ENCODE measurements at regions of chr13 and their contacts with region 1.

Region 1: DNA sequence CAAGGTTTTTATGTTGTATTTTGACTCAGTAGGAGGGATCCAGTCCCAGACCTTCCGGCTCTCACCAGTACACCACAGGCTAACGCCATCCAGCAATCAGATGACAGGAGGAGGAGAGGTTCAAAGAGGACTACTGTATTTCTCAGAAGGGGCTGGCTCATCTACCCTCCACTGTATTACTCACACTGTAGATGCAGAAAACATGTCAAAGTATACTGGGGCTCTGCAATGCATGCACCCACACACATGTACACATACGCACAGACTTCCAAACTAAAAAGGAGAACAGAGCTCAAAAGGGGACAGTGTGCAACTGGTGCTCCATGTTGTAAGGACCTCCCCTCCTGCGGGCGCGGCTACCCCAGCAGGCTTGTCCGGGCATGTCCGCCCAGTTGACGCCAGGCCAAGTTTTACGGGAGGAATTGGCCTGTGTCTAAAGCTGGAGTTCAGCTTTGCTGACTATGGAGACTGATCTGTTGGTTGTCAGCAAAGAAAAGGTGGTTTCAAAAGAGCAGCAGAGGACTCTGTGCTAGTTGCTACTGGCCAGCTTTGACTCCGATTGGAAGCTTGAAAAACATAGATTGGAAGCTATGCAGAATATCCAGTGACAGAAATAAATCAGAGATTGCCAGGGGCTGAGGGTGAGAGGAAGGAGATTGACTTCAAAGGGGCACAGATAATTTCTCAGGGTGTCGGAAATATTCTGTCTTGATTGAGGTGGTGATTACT is 314.2 kb downstream of the DLEU7 start:
- DNase-seq: peak; percentile 94
- ATAC-seq: peak; percentile 95

Region 2: GRCh38 chr13:49996951-49997895 is 532.1 kb before region 1 on chr13 and contains the start of gene TRIM13:
- intact Hi-C with region 1: loop called (anchors 5 kb)
- DNase-seq: peak; percentile 94
- ATAC-seq: peak; percentile 91
- total RNA-seq, gene TRIM13: 24.2 TPM

Region 3: GRCh38 chr13:50123862-50124536 is 405.3 kb before region 1 on chr13:
- intact Hi-C with region 1: loop called (anchors 5 kb)
- DNase-seq: no peak
- ATAC-seq: peak; percentile 92

Region 4: DNA sequence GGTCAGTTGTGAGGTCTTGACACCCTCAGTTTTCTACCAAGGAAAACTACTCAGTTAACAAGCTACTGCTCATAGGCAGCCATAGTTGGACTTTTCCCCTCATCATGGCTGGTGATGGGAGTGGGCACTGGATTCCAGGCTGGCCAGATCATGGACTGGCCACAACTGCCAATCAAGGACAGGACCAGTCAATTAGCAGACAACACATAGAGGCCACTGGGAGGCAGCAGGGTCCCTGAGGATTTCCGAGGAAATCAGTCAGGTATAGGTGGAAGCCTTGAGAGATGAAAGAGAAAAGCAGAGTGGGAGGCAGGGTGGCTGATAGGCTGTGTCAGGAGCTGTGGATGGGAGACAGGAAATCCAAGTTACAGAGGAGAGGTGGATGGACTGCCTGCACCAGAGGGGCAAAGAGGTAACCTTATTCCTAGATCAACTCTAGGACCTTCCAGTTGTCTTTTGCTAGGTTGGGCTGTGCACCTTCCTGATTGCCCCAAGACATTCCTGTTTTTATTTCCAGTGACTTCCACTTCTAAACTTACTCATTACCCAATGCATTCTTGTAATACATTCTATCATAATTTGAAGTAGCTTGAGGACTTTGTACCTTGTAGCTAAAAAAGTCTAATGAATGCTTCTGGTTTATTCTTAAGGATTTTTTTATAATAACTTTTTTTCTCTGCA is 152.3 kb before region 1 on chr13:
- intact Hi-C with region 1: loop called (anchors 5 kb)
- DNase-seq: no peak
- ATAC-seq: peak; percentile 26

Region 5: DNA sequence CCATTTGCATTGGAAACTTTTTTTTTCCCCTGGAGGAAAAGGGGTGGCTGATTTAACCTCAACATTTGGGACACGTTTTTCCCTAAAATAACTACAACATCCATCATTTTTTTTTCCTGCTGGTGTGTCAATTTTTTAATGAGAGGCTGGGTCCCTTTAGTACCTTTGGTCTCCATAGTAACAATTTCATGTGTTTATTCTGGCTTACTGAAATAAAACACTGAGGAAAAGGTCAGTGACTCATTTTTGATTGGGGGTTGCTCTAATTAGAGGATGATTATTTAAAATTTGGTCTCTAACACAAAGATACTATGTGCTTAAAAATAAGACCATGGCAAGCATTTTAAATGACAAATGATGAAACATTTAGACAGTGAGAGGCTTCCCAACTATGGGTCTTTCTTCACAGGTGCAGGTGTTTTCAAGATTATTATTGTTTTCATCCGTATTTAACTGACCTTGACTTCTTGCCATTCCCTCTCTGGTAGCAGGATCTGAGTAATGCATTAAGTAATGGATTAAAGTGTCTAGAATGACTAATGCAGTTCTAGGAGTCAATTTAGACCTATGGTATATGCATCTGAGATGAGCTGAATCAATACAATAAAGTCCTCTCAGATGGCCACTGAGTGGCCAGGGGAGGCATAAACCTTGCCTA is 107.7 kb before region 1 on chr13:
- intact Hi-C with region 1: loop called (anchors 2 kb)
- DNase-seq: no peak
- ATAC-seq: no peak

Region 6: DNA sequence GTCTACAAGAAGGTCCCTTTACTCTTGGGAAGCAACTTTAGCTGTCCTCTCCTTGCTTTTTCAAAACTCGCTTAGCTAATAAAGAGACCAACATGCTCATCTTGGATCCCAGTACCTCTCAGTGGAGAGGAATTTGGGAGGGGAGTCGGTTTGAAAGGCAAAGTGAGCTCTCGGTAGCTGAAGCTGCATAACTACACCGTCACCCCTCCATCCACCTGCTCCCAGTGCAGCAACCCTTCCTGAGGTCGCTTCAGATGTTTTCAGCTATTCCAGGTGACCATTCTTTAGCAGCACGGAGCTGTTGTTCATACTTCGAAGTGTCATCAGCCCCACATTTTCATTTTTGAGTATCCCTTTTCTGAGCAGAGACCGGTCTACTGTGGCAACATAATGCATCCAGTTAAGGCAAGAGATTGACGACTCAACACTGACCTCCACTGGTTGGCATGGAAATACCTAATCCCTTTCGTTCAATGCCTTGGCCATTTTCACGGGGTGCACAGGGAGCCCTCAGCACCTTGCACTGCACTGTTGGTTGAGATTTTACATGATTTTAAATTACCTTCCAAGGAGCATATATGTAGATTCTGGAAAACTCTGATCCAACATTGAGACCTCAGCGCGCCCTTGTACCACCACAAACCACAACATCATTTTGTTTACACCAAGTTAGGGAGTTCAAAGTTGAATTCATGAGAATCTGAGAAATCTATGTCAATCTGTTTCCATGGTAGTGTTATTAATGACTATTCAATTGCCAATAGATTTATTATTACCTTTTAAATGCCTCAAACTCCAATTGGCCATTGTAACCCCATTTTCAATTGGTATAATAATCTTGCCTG is 272.0 kb after region 1 on chr13:
- intact Hi-C with region 1: loop called (anchors 5 kb)
- DNase-seq: no peak
- ATAC-seq: peak; percentile 93